Activated naive CD8-positive, alpha-beta T cell treated with anti-CD3 and anti-CD28 coated beads, Interleukin-2, amount 10 ng/mL, durations not matched to agents 7 days and 5 days (primary cell): ENCODE measurements at regions of chr2 and their contacts with region 1.

Region 1: GRCh38 chr2:219229305-219230058 is at the starts of genes ANKZF1 and ATG9A:
- DNase-seq: peak; percentile 94
- ATAC-seq: peak; percentile 95
- H3K4me3 Mint-ChIP-seq: peak within 1 kb of the TSS; percentile 90
- H3K27ac Mint-ChIP-seq: peak within 1 kb of the TSS; percentile 93
- H3K4me1 Mint-ChIP-seq: peaks cover 40% of the 10 kb centered on the region
- H3K27me3 Mint-ChIP-seq: no peaks in the 10 kb centered on the region
- total RNA-seq, gene ANKZF1: 170 to 177 TPM
- total RNA-seq, gene ATG9A: 56.0 to 62.1 TPM

Region 2: GRCh38 chr2:219177552-219178376 is 51.7 kb before region 1 on chr2 and contains the start of gene RETREG2:
- POLR2A ChIA-PET with region 1: interaction called, 15 read pairs
- DNase-seq: peak; percentile 88
- ATAC-seq: peak; percentile 43
- H3K4me3 Mint-ChIP-seq: peak within 1 kb of the TSS; percentile 97
- H3K27ac Mint-ChIP-seq: peak within 1 kb of the TSS; percentile 93
- H3K4me1 Mint-ChIP-seq: peaks cover 60% of the 10 kb centered on the region
- H3K27me3 Mint-ChIP-seq: no peaks in the 10 kb centered on the region
- total RNA-seq, gene RETREG2: 129 TPM

Region 3: GRCh38 chr2:219218732-219219701 is 10.5 kb before region 1 on chr2 and contains the start of gene ABCB6:
- POLR2A ChIA-PET with region 1: interaction called, 34 read pairs
- DNase-seq: peak; percentile 82
- ATAC-seq: peak; percentile 86
- H3K4me3 Mint-ChIP-seq: peak within 1 kb of the TSS; percentile 82
- H3K27ac Mint-ChIP-seq: peak within 1 kb of the TSS; percentile 65
- H3K4me1 Mint-ChIP-seq: peaks cover 15% of the 10 kb centered on the region
- H3K27me3 Mint-ChIP-seq: no peaks in the 10 kb centered on the region
- total RNA-seq, gene ABCB6: 13.1 to 14.3 TPM

Region 4: DNA sequence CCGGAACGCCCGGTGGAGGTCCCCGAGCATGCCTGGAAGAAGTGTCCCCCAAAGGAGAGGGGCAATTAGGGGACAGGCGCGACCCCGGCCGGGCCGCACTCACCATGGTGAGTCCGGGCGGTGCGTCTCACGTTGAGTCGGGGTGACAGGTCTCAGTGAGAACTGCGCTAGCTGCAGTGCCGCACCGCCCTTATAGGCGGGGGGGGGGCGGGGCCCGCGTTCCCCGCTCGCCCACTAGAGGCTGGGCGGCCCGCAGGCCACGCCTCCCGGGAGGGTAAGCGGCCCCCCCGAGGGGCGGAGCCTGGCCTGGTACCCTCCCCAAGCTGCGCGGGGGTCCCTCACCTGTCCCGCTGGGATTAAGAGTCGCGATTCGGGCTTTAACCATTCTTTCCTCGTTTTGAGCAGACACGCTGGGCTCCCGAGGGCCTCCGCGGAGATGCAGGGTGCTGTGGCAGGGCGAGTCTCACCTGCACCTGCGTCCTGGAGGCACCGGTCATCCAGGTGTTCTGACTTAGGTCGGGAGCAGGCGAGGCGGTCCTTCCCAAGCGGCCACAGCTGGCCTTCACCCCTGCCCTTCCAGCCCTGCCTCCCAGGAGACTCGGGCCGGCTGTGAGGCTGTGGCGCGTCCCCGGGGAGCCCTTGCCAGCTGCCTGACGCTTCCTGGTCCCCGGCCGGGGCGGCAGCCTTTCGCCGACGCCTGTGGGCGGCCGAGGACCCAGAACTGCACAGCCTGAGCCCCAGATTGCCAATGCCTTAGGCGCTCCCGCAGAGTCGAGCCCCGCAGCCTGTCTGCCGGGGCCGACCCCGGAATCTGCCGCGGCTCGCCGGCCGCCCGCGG is 24.5 kb after region 1 on chr2 and contains the start of gene TUBA4A:
- POLR2A ChIA-PET with region 1: interaction called, 83 read pairs
- DNase-seq: peak; percentile 94
- ATAC-seq: peak; percentile 69
- H3K4me3 Mint-ChIP-seq: peak within 1 kb of the TSS; percentile 99
- H3K27ac Mint-ChIP-seq: peak within 1 kb of the TSS; percentile 90
- H3K4me1 Mint-ChIP-seq: peaks cover 40% of the 10 kb centered on the region
- H3K27me3 Mint-ChIP-seq: no peaks in the 10 kb centered on the region
- total RNA-seq, gene TUBA4A: 237 to 266 TPM

Region 5: GRCh38 chr2:219294356-219295351 is 65.2 kb after region 1 on chr2:
- POLR2A ChIA-PET with region 1: interaction called, 10 read pairs
- DNase-seq: peak; percentile 95
- ATAC-seq: peak; percentile 92
- H3K4me3 Mint-ChIP-seq: peak overlapping the region; percentile 84
- H3K27ac Mint-ChIP-seq: peak overlapping the region; percentile 70
- H3K4me1 Mint-ChIP-seq: peaks cover 23% of the 10 kb centered on the region
- H3K27me3 Mint-ChIP-seq: peaks cover 8% of the 10 kb centered on the region

Region 6: DNA sequence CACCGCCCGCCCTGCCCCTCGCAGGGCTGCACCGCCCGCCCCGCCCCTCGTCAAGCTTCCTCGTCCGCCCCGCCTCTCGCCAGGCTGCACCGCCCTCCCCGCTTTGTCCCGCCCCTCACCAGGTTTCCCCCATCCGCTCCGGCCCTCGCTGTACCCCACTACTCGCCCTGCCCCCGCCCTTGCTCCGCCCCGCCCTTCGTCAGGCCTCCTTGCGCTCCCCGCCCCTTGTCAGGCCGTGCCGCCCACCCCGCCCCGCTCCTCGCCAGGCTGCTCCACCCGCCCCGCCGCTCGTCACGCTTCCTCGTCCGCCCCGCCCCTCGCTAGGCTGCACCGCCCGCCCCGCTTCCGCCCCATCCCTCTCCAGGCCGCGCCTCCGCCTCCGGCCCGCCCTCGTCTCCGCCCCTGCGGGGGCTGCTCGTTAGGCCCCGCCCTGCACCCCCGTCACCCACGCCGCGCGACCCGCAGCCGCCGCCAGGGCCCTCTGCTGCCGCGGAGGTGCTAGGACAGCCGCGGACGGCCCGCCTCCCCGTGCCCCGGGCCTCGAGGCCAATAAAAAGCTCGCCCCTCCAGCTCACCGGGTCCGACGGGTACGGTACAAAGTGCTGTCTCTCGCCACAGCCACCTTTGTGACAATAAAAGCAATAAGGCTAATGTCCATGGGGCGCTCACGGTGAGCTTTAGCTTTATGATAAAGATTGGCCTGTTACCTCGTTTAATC is 158.8 kb after region 1 on chr2:
- POLR2A ChIA-PET with region 1: no interaction called
- DNase-seq: peak; percentile 99
- ATAC-seq: peak; percentile 77
- H3K4me3 Mint-ChIP-seq: peak overlapping the region; percentile 75
- H3K27ac Mint-ChIP-seq: peak overlapping the region; percentile 76
- H3K4me1 Mint-ChIP-seq: peaks cover 8% of the 10 kb centered on the region
- H3K27me3 Mint-ChIP-seq: peaks cover 4% of the 10 kb centered on the region